Common myeloid progenitor, CD34-positive (primary cell): ENCODE measurements at regions of chr17 and their contacts with region 1.

Region 1: GRCh38 chr17:3818786-3819185 is 17.8 kb upstream of the ITGAE start:
- DNase-seq: no peak
- H3K4me3 ChIP-seq: no peak overlapping the region
- H3K27ac ChIP-seq: no peak overlapping the region
- H3K4me1 ChIP-seq: peaks cover 0 to 5% (median 0%) of the 10 kb centered on the region in 4 experiments
- H3K27me3 ChIP-seq: no peaks in the 10 kb centered on the region

Region 2: DNA sequence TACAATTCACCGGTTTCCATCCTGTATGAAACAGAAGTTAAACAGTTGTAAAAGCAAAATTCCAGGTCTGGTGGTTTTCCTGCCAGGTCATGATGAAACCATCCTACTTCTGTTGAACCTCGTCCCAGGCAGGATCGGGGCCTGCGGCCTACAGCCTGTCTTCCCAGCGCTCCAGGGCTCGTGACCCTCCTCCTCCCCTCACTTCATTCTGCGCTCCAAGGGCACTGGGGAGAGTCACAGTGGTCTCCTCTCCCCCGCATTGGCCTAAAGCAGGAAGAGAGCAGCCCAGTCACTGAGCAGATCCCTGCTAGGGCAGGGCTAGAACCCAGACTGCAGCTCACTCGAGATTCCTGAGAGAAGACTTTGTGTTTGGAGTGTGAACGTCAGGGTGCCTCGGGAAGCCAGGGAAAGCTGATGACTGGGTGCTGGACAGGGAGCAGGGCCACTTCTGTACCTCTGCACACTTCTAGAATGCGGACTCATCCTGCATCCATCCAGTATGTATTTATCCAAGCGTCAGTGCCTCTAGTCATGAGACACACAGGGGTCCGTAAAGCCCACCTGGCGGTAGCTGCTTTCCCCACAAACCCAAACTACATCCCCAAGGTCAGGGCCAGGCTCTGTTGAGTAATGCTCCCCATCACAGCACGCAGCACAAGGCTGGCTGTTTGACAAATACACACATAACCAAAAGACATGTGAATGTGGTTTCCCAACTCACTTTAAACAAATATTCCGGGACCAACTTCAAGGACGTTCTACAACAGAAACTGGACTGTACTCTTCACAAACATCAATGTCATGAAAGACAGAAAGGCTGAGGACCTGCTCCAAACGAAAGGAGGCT is 16.1 kb before region 1 on chr17:
- CTCF ChIA-PET with region 1: interaction called, 11 read pairs
- POLR2A ChIA-PET with region 1: interaction called, 5 read pairs
- DNase-seq: no peak
- H3K4me3 ChIP-seq: no peak overlapping the region
- H3K27ac ChIP-seq: no peak overlapping the region
- H3K4me1 ChIP-seq: peaks cover 2 to 31% (median 15%) of the 10 kb centered on the region in 4 experiments
- H3K27me3 ChIP-seq: no peaks in the 10 kb centered on the region

Region 3: GRCh38 chr17:3838206-3838605 is 19.4 kb after region 1 on chr17:
- CTCF ChIA-PET with region 1: no interaction called
- POLR2A ChIA-PET with region 1: interaction called, 14 read pairs
- DNase-seq: no peak
- H3K4me3 ChIP-seq: no peak overlapping the region
- H3K27ac ChIP-seq: peak overlapping the region in 1 of 2 experiments; percentile 11
- H3K4me1 ChIP-seq: no peaks in the 10 kb centered on the region
- H3K27me3 ChIP-seq: no peaks in the 10 kb centered on the region